Pancreas (tissue), 10 donors: ENCODE measurements at regions of chr2 and their contacts with region 1.

Region 1: DNA sequence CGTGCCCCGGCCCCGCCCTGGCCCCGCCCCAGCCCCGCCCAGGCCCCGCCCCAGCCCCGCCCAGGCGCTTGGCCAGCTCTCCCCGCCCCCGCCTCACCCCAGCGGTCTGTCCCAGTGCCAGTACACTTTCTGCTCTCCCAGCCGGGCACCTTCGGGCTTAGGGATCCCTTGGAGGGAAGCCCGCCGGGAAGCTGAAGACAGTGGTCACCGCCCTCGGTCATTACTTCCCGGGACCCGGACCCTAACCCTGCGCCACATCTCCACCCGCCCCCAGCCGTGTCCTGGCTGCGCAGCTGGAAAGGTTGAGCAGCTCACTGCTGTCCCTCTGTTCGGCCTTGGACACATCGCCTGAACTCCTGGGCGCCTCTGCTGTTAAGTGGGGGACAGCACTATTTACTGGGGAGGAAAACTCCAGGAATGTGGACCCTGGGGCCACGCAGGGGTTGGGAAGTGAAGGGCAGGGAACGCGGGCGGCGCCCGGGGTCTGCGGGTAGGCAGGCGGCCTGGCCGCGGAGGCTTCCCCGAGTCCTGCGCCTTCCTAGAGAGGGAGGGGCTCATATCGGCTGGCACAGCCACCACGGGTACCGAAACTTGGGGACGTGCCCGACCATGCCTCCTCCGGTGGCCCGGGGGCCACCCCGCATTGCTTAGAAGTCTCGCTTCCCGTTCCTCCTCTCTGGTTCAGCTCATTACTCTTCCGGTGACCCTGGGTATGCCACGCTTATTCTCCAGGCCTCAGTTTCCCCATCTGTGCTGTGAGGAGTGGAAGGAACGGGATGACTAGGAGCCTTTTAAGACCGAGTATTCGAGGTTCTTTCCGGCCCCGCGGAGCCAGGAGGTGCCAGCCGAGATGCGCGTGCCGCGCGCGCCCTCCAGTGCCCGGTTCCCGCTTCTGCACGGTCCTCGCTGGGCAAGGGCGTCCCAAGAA is 121.0 kb downstream of the GYPC start:
- DNase-seq: peak; percentile 67 to 93 (median 81)
- ATAC-seq: peak; percentile 94 to 97 (median 94)
- H3K4me3 ChIP-seq: peak overlapping the region; percentile 29 to 59 (median 44)
- H3K27ac ChIP-seq: peak overlapping the region; percentile 47 to 66 (median 56)
- H3K4me1 ChIP-seq: no peaks in the 10 kb centered on the region
- H3K27me3 ChIP-seq: no peaks in the 10 kb centered on the region
- CTCF ChIP-seq: peak; percentile 63 to 91 (median 90)

Region 2: DNA sequence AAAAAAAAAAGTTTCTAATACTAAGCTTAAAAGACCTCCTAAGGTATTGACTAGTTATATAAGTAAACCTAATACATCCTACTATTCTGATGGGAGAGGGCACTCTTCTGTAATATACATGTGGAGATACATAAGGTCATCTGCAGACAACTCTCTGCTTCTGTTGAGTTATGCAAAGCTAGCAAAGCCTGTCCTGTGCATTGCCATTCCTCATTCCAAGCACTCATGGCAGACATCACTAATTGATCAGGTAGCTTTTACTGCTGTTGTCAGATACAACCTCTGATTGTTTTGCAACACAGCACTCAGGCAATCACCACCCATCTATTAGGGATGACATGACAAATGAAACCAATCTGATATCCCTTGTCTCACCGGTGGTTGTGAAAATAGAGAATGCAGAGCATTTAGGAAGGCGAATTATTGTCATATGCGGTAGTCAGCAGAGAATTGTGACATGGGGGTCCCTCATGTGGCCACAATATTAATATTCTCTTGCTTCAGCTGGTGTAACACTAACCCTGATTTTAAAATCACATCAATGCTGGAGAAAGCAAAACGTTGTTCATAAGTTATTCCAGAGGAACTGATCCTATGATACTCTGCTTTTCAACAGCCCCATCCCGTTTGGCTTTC is 537.5 kb before region 1 on chr2:
- intact Hi-C with region 1: loop called in 2 of 3 experiments (anchors 10 kb)
- DNase-seq: no peak
- ATAC-seq: no peak
- H3K4me3 ChIP-seq: no peak overlapping the region
- H3K27ac ChIP-seq: no peak overlapping the region
- H3K4me1 ChIP-seq: no peaks in the 10 kb centered on the region
- H3K27me3 ChIP-seq: no peaks in the 10 kb centered on the region
- CTCF ChIP-seq: no peak

Region 3: GRCh38 chr2:126244937-126245336 is 532.0 kb before region 1 on chr2:
- intact Hi-C with region 1: loop called in 1 of 3 experiments (anchors 10 kb)
- DNase-seq: peak in 5 of 6 donors; percentile 47 to 74 (median 53)
- ATAC-seq: peak in 3 of 4 donors; percentile 63 to 91 (median 75)
- H3K4me3 ChIP-seq: no peak overlapping the region
- H3K27ac ChIP-seq: no peak overlapping the region
- H3K4me1 ChIP-seq: no peaks in the 10 kb centered on the region
- H3K27me3 ChIP-seq: peaks cover 0 to 4% (median 0%) of the 10 kb centered on the region in 4 donors
- CTCF ChIP-seq: peak; percentile 14 to 44 (median 32)

Region 4: DNA sequence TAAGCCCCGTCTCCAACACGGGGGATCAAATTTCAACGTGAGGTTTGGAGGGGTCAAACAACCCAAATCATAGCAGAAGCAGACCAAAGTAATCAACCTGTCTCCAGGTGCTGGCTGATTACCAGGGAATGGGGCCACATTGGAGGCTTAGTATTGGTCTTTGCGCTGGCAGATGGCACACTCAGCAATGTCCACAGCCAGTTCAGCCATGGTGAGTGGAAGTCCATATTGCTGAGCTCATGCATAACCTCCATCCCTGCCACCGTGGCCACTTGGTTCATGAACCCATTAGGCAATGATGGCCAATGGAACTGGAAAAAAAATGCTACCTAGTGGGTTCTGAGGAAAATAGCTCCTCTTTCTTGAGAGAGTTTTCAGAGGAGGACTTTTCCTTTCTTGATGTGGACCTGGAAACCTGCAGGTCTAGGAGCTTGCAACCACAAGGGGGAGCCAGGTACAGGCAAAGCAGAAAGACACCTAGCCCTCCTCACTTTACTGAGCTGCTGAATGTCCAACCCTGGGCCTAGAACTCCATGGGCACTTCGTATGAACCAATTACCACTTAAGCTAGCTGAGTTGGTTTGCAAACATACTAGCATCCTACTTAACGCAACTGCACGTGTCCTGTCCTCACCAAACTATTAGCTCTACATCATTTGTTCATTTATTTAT is 249.0 kb before region 1 on chr2:
- intact Hi-C with region 1: loop called in 2 of 3 experiments (anchors 10 kb)
- DNase-seq: peak in 4 of 6 donors; percentile 18 to 56 (median 40)
- ATAC-seq: peak; percentile 55 to 80 (median 64)
- H3K4me3 ChIP-seq: no peak overlapping the region
- H3K27ac ChIP-seq: no peak overlapping the region
- H3K4me1 ChIP-seq: no peaks in the 10 kb centered on the region
- H3K27me3 ChIP-seq: no peaks in the 10 kb centered on the region
- CTCF ChIP-seq: peak; percentile 22 to 49 (median 41)